ENCODE measurements at regions of chr7 and their contacts with region 1.

Region 1: DNA sequence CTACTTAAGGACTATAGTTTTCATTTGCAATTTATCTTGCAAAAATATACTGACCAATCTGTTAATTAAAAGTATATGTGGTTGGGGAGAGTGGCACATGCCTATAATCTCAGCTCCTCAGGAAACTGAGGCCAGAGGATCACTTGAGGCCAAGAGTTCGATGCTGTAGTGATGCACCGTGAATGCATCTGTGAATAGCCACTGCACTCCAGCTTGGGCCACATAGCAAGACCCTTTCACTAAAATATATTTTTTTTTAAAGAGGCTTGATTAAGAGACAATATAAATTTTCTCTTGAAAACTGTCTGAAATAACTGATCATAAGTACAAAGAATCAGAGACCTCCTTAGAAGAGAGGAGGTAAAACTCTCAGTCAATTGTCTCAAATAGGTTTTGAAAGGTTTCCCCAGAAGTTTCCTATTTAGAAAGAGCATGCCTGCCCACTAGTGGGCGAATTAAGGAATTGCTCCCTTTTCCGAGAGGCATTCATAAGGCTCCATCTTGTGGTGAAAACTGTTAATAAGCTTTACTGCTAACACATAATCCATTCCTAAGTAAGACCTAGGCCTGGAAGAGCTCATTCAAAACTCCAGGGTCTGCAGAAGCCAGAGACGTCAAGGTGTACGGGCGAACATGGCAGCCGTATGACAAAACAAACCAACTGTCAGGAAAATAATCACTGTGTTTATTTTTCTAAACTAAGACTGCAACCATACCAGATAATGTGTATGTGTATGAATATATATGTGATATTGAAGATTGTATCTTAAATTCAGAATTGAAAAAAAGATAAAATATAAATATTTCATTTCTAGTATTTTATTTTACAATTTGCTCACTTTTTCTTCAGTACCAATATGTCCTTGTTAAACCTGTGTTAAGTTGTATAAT is 6.8 kb upstream of the TAS2R40 start:
- DNase-seq: peak; percentile 63
- H3K4me3 Mint-ChIP-seq: no peak overlapping the region
- H3K27ac Mint-ChIP-seq: no peak overlapping the region
- H3K4me1 Mint-ChIP-seq: no peaks in the 10 kb centered on the region
- H3K27me3 Mint-ChIP-seq: peaks cover 26% of the 10 kb centered on the region
- CTCF ChIP-seq: peak; percentile 96

Region 2: DNA sequence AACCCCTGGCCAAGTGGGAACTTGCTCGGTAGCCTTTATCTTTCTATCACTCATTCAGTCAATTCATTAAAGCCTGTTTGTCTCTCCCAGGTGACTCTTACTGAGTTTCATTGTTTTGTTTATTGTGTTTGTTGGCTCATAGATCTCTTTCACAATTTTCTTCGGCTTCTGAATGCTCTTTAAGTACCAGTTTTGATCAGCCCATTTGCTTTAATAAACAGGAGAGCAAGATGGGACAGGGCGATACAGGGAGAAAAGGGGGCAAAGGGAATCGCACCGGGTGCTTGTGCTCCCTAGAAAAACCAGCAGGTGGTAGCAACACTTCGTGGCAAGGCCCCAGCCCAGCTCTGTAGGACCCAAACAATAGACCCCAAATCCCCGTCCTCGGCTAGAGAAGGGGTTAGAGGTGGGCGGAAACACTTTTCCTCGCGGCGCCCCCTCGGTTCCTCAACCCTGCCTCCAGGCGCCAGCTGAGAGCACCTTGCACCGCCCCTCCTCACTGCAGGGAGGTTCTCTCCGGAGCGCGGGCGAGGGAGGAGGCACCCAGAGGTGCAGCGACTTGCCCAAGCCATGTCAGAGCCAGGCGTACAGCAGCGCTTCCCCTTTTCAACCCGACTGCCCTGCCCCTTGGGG is 361.2 kb before region 1 on chr7:
- CTCF ChIA-PET with region 1: interaction called, 4 read pairs
- intact Hi-C with region 1: loop called (anchors 5 kb)
- DNase-seq: peak; percentile 70
- H3K4me3 Mint-ChIP-seq: peak overlapping the region; percentile 91
- H3K27ac Mint-ChIP-seq: peak overlapping the region; percentile 69
- H3K4me1 Mint-ChIP-seq: peaks cover 21% of the 10 kb centered on the region
- H3K27me3 Mint-ChIP-seq: peaks cover 75% of the 10 kb centered on the region
- CTCF ChIP-seq: peak; percentile 85

Region 3: GRCh38 chr7:142880876-142881505 is 334.0 kb before region 1 on chr7:
- CTCF ChIA-PET with region 1: interaction called, 5 read pairs
- intact Hi-C with region 1: loop called (anchors 10 kb)
- DNase-seq: peak; percentile 63
- H3K4me3 Mint-ChIP-seq: no peak overlapping the region
- H3K27ac Mint-ChIP-seq: no peak overlapping the region
- H3K4me1 Mint-ChIP-seq: peaks cover 38% of the 10 kb centered on the region
- H3K27me3 Mint-ChIP-seq: peaks cover 76% of the 10 kb centered on the region
- CTCF ChIP-seq: peak; percentile 92

Region 4: GRCh38 chr7:143008007-143008901 is 206.8 kb before region 1 on chr7:
- CTCF ChIA-PET with region 1: interaction called, 65 read pairs
- intact Hi-C with region 1: loop called (anchors 1 kb)
- DNase-seq: peak; percentile 85
- H3K4me3 Mint-ChIP-seq: no peak overlapping the region
- H3K27ac Mint-ChIP-seq: no peak overlapping the region
- H3K4me1 Mint-ChIP-seq: peaks cover 7% of the 10 kb centered on the region
- H3K27me3 Mint-ChIP-seq: peaks cover 70% of the 10 kb centered on the region
- CTCF ChIP-seq: peak; percentile 93

Region 5: GRCh38 chr7:143013893-143014292 is 201.1 kb before region 1 on chr7:
- CTCF ChIA-PET with region 1: interaction called, 65 read pairs
- intact Hi-C with region 1: no loop called
- DNase-seq: no peak
- H3K4me3 Mint-ChIP-seq: no peak overlapping the region
- H3K27ac Mint-ChIP-seq: no peak overlapping the region
- H3K4me1 Mint-ChIP-seq: no peaks in the 10 kb centered on the region
- H3K27me3 Mint-ChIP-seq: peaks cover 65% of the 10 kb centered on the region
- CTCF ChIP-seq: no peak

Region 6: DNA sequence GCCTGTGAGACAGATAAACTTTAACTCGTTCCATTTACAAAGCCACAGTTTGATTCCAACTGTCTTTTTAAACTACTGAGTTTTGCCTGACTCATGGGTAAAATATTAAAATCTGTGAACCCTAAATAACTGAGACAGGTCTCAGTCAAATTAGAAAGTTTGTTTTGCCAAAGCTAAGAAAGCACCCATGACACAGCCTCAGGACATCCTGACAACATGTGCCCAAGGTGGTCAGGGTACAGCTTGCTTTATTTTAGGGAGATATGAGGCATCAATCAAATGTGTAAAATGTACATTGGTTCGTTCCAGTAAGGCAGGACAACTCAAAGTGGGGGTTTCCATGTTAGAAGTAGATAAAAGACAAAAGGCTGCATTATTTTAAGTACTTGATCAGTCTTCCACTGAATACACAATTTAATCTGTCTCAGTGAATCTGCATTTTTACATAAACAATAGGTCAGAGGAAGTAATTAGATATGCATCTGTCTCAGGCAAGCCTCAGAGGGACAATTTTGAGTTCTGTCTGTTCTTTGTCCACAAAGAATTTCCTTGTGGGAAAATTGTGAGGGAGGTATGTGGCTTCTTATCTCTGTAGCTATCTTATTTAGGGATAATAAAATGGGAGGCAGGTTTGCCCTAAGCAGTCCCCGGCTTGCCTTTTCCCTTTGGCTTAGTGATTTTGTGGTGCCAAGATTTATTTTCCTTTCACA is 94.2 kb before region 1 on chr7:
- CTCF ChIA-PET with region 1: no interaction called
- intact Hi-C with region 1: loop called (anchors 5 kb)
- DNase-seq: no peak
- H3K4me3 Mint-ChIP-seq: no peak overlapping the region
- H3K27ac Mint-ChIP-seq: no peak overlapping the region
- H3K4me1 Mint-ChIP-seq: peaks cover 15% of the 10 kb centered on the region
- H3K27me3 Mint-ChIP-seq: no peaks in the 10 kb centered on the region
- CTCF ChIP-seq: no peak

Region 7: DNA sequence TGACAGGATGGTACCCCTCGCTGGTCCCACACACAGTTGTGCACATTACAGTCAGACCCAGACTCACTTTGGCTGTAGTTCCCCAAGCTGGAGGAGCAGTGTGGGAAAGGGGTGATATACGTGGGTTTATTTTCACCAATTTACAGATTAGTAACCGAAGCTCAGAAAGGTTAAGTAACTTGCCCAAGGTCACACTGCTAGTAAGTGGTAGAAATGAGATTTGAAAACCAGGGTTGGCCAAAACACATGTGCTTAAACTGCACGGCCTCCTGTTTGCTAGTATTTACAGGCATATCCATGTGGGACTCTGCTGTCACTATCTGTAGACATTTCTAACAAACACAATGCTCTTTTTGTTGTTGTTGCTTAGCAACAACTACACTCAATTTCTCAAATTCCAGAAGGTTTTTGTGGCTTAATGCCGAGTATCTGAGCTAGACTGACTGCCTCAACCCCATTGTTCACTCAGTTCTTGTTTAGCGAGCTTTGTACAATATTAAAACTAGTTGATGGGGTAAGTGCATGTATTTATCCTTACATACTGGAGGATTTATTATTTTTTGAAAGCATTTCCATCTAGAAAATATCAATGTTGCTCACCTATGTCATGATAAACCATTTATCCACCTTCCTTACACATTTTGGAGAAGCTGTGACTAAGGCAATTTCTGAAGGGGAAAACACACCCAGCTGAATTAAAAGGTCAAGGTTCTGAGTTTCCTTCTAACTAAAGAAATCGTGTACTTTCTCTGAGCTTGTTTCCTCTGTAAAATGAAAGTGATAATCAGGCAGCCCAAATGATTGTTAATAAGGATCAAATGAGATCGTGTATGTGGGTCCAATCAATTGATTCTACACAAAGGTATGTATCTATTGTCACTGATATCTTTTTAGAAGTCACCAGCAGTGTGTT is 64.4 kb after region 1 on chr7:
- CTCF ChIA-PET with region 1: no interaction called
- intact Hi-C with region 1: no loop called
- DNase-seq: peak; percentile 48
- H3K4me3 Mint-ChIP-seq: peak overlapping the region; percentile 37
- H3K27ac Mint-ChIP-seq: peak overlapping the region; percentile 90
- H3K4me1 Mint-ChIP-seq: peaks cover 37% of the 10 kb centered on the region
- H3K27me3 Mint-ChIP-seq: no peaks in the 10 kb centered on the region
- CTCF ChIP-seq: no peak

Region 8: GRCh38 chr7:144468990-144469732 is 1254.1 kb after region 1 on chr7:
- CTCF ChIA-PET with region 1: no interaction called
- intact Hi-C with region 1: no loop called
- DNase-seq: no peak
- H3K4me3 Mint-ChIP-seq: no peak overlapping the region
- H3K27ac Mint-ChIP-seq: no peak overlapping the region
- H3K4me1 Mint-ChIP-seq: peaks cover 8% of the 10 kb centered on the region
- H3K27me3 Mint-ChIP-seq: no peaks in the 10 kb centered on the region
- CTCF ChIP-seq: no peak